WTC11 (cell line): ENCODE measurements at regions of chr5 and their contacts with region 1.

Region 1: GRCh38 chr5:175534070-175534932 is 55.9 kb downstream of the SFXN1 start:
- DNase-seq: peak; percentile 92
- ATAC-seq: peak; percentile 89
- H3K4me3 Mint-ChIP-seq: peak overlapping the region; percentile 33
- H3K27ac Mint-ChIP-seq: no peak overlapping the region
- H3K4me1 Mint-ChIP-seq: peaks cover 41% of the 10 kb centered on the region
- H3K27me3 Mint-ChIP-seq: no peaks in the 10 kb centered on the region
- CTCF ChIP-seq: peak; percentile 99

Region 2: GRCh38 chr5:175516933-175517817 is 17.1 kb before region 1 on chr5:
- CTCF ChIA-PET with region 1: interaction called, 16 read pairs
- POLR2A ChIA-PET with region 1: interaction called, 9 read pairs
- DNase-seq: no peak
- ATAC-seq: no peak
- H3K4me3 Mint-ChIP-seq: no peak overlapping the region
- H3K27ac Mint-ChIP-seq: no peak overlapping the region
- H3K4me1 Mint-ChIP-seq: no peaks in the 10 kb centered on the region
- H3K27me3 Mint-ChIP-seq: no peaks in the 10 kb centered on the region
- CTCF ChIP-seq: no peak

Region 3: GRCh38 chr5:175572886-175573285 is 38.6 kb after region 1 on chr5:
- CTCF ChIA-PET with region 1: interaction called, 96 read pairs
- POLR2A ChIA-PET with region 1: interaction called, 5 read pairs
- DNase-seq: no peak
- ATAC-seq: no peak
- H3K4me3 Mint-ChIP-seq: no peak overlapping the region
- H3K27ac Mint-ChIP-seq: no peak overlapping the region
- H3K4me1 Mint-ChIP-seq: peaks cover 41% of the 10 kb centered on the region
- H3K27me3 Mint-ChIP-seq: peaks cover 39% of the 10 kb centered on the region
- CTCF ChIP-seq: no peak

Region 4: GRCh38 chr5:175609526-175609925 is 75.2 kb after region 1 on chr5:
- CTCF ChIA-PET with region 1: interaction called, 33 read pairs
- POLR2A ChIA-PET with region 1: no interaction called
- DNase-seq: no peak
- ATAC-seq: no peak
- H3K4me3 Mint-ChIP-seq: no peak overlapping the region
- H3K27ac Mint-ChIP-seq: no peak overlapping the region
- H3K4me1 Mint-ChIP-seq: peaks cover 14% of the 10 kb centered on the region
- H3K27me3 Mint-ChIP-seq: peaks cover 7% of the 10 kb centered on the region; the same call in 1 of the 2 replicates
- CTCF ChIP-seq: no peak

Region 5: DNA sequence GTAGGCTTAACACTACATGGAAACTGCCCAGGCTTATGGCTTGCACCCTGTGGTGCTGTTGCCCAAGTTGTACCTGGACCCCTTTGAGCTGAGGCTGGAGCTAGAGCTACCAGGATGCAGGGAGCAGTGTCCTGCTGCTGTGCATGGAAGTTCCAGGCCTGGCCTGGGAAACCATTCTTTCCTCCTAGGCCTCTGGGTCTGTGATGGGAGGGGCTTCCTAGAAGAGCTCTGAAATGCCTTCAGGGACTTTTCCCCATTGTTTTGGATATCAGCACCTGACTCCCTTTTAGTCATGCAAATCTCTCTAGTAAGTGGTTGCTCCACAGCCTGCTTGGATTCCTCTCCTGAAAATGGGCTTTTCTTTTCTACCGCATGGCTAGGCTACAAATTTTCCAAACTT is 115.7 kb after region 1 on chr5:
- CTCF ChIA-PET with region 1: interaction called, 58 read pairs
- POLR2A ChIA-PET with region 1: no interaction called
- DNase-seq: no peak
- ATAC-seq: peak; percentile 44; the same call in 1 of the 2 replicates
- H3K4me3 Mint-ChIP-seq: no peak overlapping the region
- H3K27ac Mint-ChIP-seq: no peak overlapping the region
- H3K4me1 Mint-ChIP-seq: peaks cover 15% of the 10 kb centered on the region
- H3K27me3 Mint-ChIP-seq: peaks cover 20% of the 10 kb centered on the region
- CTCF ChIP-seq: no peak

Region 6: DNA sequence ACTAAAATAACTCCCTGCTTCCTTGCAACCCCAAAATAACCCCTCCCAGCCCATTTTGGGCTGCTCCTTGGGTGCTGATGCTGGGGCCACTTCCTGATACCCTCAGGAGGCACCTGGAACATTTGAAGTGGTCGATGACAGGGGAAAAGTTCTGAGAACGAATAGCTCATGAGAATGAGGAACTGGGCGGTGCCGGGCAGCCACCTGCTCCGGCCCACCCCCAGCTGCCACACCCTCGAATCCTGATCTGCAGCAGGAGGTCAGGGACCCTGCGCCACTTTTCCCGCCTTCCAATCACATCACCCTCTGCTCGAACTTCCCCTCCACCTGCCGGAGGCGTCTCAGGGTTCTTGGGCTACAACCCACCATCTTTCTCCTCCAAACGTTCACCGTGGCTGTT is 143.3 kb after region 1 on chr5:
- CTCF ChIA-PET with region 1: interaction called, 20 read pairs
- POLR2A ChIA-PET with region 1: no interaction called
- DNase-seq: no peak
- ATAC-seq: no peak
- H3K4me3 Mint-ChIP-seq: no peak overlapping the region
- H3K27ac Mint-ChIP-seq: no peak overlapping the region
- H3K4me1 Mint-ChIP-seq: peaks cover 33% of the 10 kb centered on the region
- H3K27me3 Mint-ChIP-seq: no peaks in the 10 kb centered on the region
- CTCF ChIP-seq: no peak

Region 7: GRCh38 chr5:175718401-175719108 is 184.3 kb after region 1 on chr5:
- CTCF ChIA-PET with region 1: interaction called, 100 read pairs
- POLR2A ChIA-PET with region 1: no interaction called
- DNase-seq: peak; percentile 70
- ATAC-seq: 0 out of 2 replicates have a peak, but pooled peaks have one; percentile 34
- H3K4me3 Mint-ChIP-seq: no peak overlapping the region
- H3K27ac Mint-ChIP-seq: no peak overlapping the region
- H3K4me1 Mint-ChIP-seq: peaks cover 9% of the 10 kb centered on the region
- H3K27me3 Mint-ChIP-seq: peaks cover 3% of the 10 kb centered on the region; the same call in 1 of the 2 replicates
- CTCF ChIP-seq: peak; percentile 72